OCI-LY7 (cell line): ENCODE measurements at regions of chr5 and their contacts with region 1.

Region 1: GRCh38 chr5:101045689-101046088 is 142.6 kb upstream of the ST8SIA4 start:
- DNase-seq: peak; percentile 38
- H3K4me3 ChIP-seq: no peak overlapping the region
- H3K27ac ChIP-seq: no peak overlapping the region
- H3K4me1 ChIP-seq: no peaks in the 10 kb centered on the region
- CTCF ChIP-seq: peak; percentile 79

Region 2: DNA sequence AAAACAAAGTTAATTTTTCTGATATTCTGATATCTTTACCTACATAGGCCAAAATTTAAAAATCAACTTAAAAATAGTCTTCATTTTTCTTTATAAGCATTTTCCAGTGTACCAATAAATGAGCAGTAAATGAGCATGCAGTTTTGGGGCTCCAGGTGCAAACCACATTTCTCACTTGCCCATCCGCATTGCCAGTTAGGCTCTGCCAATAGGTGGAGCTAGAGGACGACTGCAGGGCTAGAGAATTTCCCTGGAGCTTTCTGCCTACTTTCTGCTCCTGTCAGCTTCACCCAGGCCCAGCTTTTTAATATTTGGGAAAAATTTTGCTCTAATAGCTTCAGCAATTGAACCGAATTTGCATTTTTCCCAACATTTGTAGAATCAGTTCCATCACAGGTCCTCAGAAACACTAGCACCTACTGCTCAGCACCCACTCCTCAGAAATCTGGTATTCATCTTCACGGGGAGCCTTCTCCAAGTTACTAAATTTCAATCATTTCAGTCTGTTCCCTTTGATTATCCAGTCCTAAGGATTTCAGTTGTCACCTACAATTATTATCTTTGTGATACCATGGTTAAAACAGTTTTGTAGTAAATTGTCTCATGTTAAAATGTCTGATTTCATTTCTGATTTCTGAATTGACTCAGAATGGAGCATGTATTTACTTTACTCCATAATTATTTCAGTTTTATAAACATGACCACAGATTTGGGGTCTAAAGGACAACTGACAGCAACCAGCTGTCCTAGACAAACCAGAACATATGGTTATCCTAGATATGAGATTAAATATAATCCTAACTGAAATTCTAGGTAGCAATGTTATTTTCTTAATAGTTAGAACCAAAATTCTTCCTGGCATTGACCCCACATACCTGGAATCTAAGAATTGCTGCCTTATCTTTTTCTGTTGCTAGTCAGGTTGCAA is 615.2 kb before region 1 on chr5:
- CTCF ChIA-PET with region 1: no interaction called
- POLR2A ChIA-PET with region 1: no interaction called
- intact Hi-C with region 1: loop called (anchors 10 kb)
- DNase-seq: peak; percentile 53
- H3K4me3 ChIP-seq: no peak overlapping the region
- H3K27ac ChIP-seq: no peak overlapping the region
- H3K4me1 ChIP-seq: no peaks in the 10 kb centered on the region
- CTCF ChIP-seq: peak; percentile 93